Posterior vena cava (tissue), 2 donors: ENCODE measurements at regions of chr9 and their contacts with region 1.

Region 1: GRCh38 chr9:69961830-69962229 is 81.8 kb upstream of the MAMDC2 start:
- DNase-seq: no peak

Region 2: DNA sequence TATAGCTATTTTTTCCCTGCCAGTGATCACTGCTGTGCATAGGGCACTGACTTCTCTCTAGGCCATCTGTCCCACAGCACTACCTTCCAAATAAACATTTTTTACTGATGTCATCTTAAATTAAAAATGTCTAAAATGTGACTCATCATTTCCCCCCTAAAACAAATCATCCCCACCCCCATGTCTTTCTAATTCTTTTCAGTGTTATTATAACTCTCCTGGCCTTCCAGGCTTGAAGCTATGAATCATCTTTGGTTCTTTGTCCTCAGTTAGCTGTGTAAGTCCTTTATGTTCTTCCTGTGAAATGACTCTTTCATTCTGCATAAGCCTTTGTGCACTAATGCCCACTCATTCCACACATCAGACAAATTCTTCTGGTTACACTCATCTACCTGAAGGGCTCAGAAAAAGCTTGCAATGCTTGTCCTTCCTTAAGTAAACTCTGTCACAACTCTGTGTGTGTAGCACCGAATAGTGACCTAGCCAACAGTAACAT is 63.1 kb before region 1 on chr9:
- intact Hi-C with region 1: no loop called
- DNase-seq: no peak

Region 3: DNA sequence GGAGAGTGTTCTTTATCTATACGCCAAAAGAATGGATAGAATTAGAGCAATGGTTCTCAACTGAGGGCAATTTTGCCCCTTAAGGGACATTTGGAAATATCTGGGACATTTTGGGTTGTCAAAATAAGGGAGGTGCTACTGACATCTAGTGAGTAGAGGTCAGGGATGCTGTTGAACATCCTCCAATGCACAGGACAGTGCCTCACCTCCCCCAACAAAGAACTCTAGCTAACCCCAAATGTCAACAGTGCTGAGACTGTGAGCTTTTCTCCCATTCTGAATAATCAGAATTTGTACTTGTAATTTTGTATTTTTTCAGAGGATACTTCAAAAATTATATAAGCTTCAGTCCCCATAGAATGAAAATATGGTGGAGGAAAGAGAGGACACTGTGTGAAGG is 288.4 kb after region 1 on chr9:
- intact Hi-C with region 1: loop called in 1 of 2 experiments (anchors 10 kb)
- DNase-seq: no peak